OCI-LY7 (cell line): ENCODE measurements at regions of chr14 and their contacts with region 1.

Region 1: GRCh38 chr14:50785457-50786063 is 45.4 kb downstream of the NIN start:
- DNase-seq: peak; percentile 35
- H3K4me3 ChIP-seq: no peak overlapping the region
- H3K27ac ChIP-seq: peak overlapping the region; percentile 97
- H3K4me1 ChIP-seq: peaks cover 59% of the 10 kb centered on the region
- CTCF ChIP-seq: no peak

Region 2: GRCh38 chr14:50231475-50232275 is 553.9 kb before region 1 on chr14 and contains the start of gene SOS2:
- CTCF ChIA-PET with region 1: no interaction called
- POLR2A ChIA-PET with region 1: no interaction called
- intact Hi-C with region 1: loop called (anchors 5 kb)
- DNase-seq: peak; percentile 91
- H3K4me3 ChIP-seq: peak within 1 kb of the TSS; percentile 94
- H3K27ac ChIP-seq: peak within 1 kb of the TSS; percentile 81
- H3K4me1 ChIP-seq: peaks cover 18% of the 10 kb centered on the region
- CTCF ChIP-seq: 0 out of 2 replicates have a peak, but pooled peaks have one; percentile 12
- total RNA-seq, gene SOS2: 13.5 and 16.5 TPM in 2 replicates

Region 3: GRCh38 chr14:50762001-50762930 is 23.3 kb before region 1 on chr14:
- CTCF ChIA-PET with region 1: interaction called, 3 read pairs
- POLR2A ChIA-PET with region 1: interaction called, 11 read pairs
- intact Hi-C with region 1: no loop called
- DNase-seq: no peak
- H3K4me3 ChIP-seq: no peak overlapping the region
- H3K27ac ChIP-seq: no peak overlapping the region
- H3K4me1 ChIP-seq: no peaks in the 10 kb centered on the region
- CTCF ChIP-seq: no peak

Region 4: GRCh38 chr14:50773632-50774541 is 11.7 kb before region 1 on chr14:
- CTCF ChIA-PET with region 1: interaction called, 3 read pairs
- POLR2A ChIA-PET with region 1: interaction called, 44 read pairs
- intact Hi-C with region 1: no loop called
- DNase-seq: peak; percentile 30
- H3K4me3 ChIP-seq: no peak overlapping the region
- H3K27ac ChIP-seq: no peak overlapping the region
- H3K4me1 ChIP-seq: peaks cover 14% of the 10 kb centered on the region
- CTCF ChIP-seq: peak; percentile 82

Region 5: GRCh38 chr14:50813544-50813863 is 27.9 kb after region 1 on chr14:
- CTCF ChIA-PET with region 1: no interaction called
- POLR2A ChIA-PET with region 1: interaction called, 156 read pairs
- intact Hi-C with region 1: no loop called
- DNase-seq: peak; percentile 70
- H3K4me3 ChIP-seq: peak overlapping the region; percentile 50
- H3K27ac ChIP-seq: peak overlapping the region; percentile 74
- H3K4me1 ChIP-seq: peaks cover 37% of the 10 kb centered on the region
- CTCF ChIP-seq: no peak

Region 6: DNA sequence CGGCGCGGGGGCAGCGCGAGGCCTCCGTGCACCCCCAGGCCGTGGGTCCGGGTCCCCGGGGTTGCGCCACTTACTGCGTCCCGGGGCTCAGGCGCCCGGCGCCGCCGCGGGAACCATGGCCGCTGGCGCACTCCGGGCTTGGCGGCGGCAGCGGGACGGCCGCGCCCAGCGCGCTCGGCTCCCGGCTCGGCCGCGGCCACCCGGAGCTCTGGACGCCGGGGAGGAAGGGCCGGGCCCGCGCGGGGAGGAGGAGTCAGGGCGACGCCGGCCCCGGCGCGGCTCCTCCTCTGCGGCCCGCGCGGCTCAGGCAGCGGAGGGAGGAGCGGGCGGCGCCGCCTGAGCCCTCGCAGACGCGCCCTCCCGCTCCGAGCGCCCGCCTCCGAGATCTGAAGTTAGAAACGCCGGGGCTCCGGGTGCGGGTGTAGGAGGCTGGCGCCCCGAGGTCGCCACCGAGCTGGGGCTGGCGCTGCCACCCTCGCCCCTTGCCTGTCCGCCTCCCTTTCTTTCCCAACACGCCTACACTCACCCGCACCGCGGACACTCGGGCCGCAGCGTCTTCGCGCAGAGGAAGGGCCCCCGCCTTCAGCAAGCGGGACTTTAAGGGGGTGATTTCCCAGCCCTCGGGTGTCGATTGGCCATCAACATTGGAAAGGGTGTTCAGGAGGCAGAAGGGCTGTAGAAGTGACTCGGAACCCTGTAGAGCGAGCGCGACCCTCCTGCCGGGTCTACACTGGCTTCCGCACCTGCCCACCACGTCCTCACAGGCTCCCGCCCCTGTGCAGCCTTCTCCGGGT is 45.6 kb after region 1 on chr14 and contains the start of gene NIN:
- CTCF ChIA-PET with region 1: interaction called, 3 read pairs
- POLR2A ChIA-PET with region 1: interaction called, 404 read pairs
- intact Hi-C with region 1: loop called (anchors 1 kb)
- DNase-seq: peak; percentile 87
- H3K4me3 ChIP-seq: peak within 1 kb of the TSS; percentile 71
- H3K27ac ChIP-seq: peak within 1 kb of the TSS; percentile 74
- H3K4me1 ChIP-seq: peaks cover 66% of the 10 kb centered on the region
- CTCF ChIP-seq: no peak
- total RNA-seq, gene NIN: 79.5 and 95.3 TPM in 2 replicates

Region 7: GRCh38 chr14:51202914-51203665 is 417.5 kb after region 1 on chr14:
- CTCF ChIA-PET with region 1: no interaction called
- POLR2A ChIA-PET with region 1: no interaction called
- intact Hi-C with region 1: no loop called
- DNase-seq: no peak
- H3K4me3 ChIP-seq: no peak overlapping the region
- H3K27ac ChIP-seq: no peak overlapping the region
- H3K4me1 ChIP-seq: no peaks in the 10 kb centered on the region
- CTCF ChIP-seq: no peak